ENCODE measurements at regions of chr2 and their contacts with region 1.

Region 1: GRCh38 chr2:222707689-222708525 is 36.4 kb downstream of the MOGAT1 start:
- DNase-seq: peak; percentile 44
- CTCF ChIP-seq: peak; percentile 92

Region 2: GRCh38 chr2:222663479-222663878 is 44.4 kb before region 1 on chr2:
- CTCF ChIA-PET with region 1: interaction called, 16 read pairs
- POLR2A ChIA-PET with region 1: no interaction called
- DNase-seq: no peak
- CTCF ChIP-seq: no peak

Region 3: GRCh38 chr2:222722327-222722946 is 14.5 kb after region 1 on chr2:
- CTCF ChIA-PET with region 1: interaction called, 18 read pairs
- POLR2A ChIA-PET with region 1: no interaction called
- DNase-seq: peak; percentile 65
- CTCF ChIP-seq: no peak

Region 4: DNA sequence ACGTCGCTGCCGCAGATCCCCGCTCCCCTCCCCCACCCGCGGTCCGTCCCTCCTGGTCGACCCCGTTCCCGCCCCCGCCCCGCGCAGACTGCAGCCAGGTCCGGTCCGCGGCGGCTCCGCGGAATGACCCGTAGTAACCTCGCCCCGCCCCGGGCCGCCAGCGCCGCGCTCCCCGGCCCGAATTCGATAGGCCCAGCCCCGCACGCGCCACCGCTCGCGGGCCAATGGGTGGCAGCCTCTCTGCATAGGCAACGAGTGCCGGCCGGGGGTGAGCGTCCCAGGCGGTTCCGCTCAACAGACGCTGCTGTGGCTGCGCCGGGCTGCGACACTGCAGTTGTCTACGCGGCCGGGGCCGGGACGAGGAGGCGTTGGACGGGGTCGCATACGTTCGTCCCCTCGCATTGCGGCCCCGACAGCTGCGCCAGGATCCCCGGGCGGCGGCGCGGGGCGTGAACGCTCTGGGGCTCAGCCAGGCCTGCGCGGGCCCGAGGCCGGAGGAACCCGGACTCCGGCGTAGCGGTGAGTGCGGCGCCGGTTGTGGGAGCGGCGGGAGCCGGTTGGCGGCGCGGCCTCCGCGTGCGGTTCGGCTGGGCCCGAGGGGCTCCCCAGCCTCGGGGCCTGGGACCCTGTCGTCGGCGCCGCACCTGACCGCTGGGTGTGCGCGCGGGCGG is 153.0 kb after region 1 on chr2 and contains the start of gene ACSL3:
- CTCF ChIA-PET with region 1: interaction called, 18 read pairs
- POLR2A ChIA-PET with region 1: no interaction called
- DNase-seq: peak; percentile 97
- CTCF ChIP-seq: no peak

Region 5: GRCh38 chr2:222903234-222904220 is 195.6 kb after region 1 on chr2:
- CTCF ChIA-PET with region 1: interaction called, 84 read pairs
- POLR2A ChIA-PET with region 1: no interaction called
- DNase-seq: peak; percentile 66
- CTCF ChIP-seq: peak; percentile 64

Region 6: DNA sequence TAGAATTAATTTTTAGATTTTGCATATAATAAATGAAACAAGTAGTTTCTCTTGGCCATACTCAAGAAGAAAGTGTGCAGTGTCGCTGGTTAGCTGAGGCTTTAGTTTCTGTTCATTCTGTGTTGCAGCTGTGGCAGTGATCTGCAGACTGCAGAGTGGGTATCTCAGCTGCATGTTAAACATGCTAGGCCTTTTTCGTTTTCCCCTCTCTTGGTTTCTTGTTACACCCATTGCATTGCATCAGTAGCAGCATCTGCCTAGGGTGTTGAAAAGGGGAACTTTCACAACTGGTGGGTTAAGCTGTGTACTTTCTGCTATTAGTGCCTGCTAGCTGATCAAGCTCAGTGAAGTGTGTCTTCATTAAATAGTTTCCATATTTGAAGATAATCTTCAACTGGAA is 204.2 kb after region 1 on chr2:
- CTCF ChIA-PET with region 1: interaction called, 44 read pairs
- POLR2A ChIA-PET with region 1: no interaction called
- DNase-seq: peak; percentile 81
- CTCF ChIP-seq: no peak

Region 7: GRCh38 chr2:222939208-222939856 is 231.4 kb after region 1 on chr2:
- CTCF ChIA-PET with region 1: interaction called, 17 read pairs
- POLR2A ChIA-PET with region 1: no interaction called
- DNase-seq: peak; percentile 24
- CTCF ChIP-seq: peak; percentile 67